ENCODE measurements at regions of chr21 and their contacts with region 1.

Region 1: DNA sequence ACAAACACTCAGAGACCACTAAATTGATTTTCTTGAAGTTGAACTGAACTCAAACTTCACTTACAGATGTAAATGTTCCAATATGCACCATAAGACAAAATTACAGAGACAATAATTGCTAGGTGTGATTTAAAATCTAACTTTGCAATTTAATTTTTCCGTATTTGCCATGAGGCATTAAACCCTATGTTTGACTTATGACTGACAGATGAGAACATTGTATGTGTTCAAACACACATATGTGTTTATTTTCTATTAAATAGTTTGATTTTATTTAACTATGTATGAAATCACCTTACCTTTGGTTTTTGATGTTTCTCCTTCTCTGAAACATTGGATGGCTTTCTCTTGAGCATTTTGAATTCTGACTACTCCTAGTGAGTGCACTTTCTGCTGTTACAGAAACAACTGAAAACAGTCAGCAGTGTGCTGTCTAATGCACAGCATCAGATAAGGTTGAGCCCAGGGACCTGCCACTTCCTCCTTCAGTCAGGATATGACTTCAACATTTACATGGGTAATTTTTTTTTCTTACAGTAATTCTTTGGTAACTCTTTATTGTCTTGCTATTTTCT is at the start of gene SAMSN1:
- DNase-seq: peak; percentile 47 to 91 (median 60)
- ATAC-seq: peak; percentile 83
- H3K4me3 ChIP-seq: peak within 1 kb of the TSS; percentile 70
- H3K4me3 Mint-ChIP-seq: peak within 1 kb of the TSS; percentile 92
- H3K27ac ChIP-seq: peak within 1 kb of the TSS; percentile 62 to 80
- H3K27ac Mint-ChIP-seq: peak within 1 kb of the TSS; percentile 87
- H3K4me1 ChIP-seq: peaks cover 27% of the 10 kb centered on the region
- H3K4me1 Mint-ChIP-seq: peaks cover 79% of the 10 kb centered on the region
- H3K27me3 ChIP-seq: no peaks in the 10 kb centered on the region
- H3K27me3 Mint-ChIP-seq: no peaks in the 10 kb centered on the region
- CTCF ChIP-seq: no peak
- total RNA-seq, gene SAMSN1: 51.2 to 51.3 TPM

Region 2: DNA sequence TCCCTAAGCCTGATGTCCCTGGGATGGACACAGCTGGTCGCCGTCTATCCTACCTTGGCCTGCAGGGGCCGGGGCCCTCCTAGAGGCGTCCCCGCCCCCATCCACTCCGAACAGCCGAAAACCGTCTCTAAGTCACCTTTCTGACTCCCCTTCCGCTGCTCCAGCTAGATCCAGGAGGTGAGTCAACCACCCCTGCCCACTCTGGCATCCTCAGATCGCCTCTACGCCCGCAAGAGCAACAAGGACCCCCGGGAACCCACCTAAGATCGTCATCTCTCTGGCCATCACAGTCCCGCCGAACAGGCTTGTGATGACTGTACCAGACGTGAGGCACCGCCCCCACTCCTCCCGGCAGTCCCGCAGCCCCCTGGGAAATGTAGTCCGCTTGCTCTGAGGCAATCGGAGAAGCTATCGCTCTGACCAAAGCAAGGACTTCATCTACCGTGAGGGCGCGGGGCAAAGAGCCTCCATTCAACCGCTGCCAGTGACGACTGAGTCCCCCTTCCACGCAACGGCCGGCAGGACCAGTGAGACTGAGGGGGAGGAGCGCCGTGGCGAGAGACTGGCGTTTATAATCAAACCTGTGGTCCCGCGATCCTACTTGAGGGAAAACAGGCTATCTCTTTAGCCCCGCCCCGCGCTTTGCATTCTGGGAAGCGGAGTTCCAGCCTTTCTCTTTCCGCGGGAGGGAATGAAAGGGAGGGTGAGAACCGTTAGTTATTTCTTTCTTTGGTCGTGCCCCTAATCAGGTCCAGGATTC is 163.0 kb before region 1 on chr21 and contains the start of gene HSPA13:
- CTCF ChIA-PET with region 1: no interaction called
- POLR2A ChIA-PET with region 1: interaction called, 5 read pairs
- intact Hi-C with region 1: loop called in 1 of 2 experiments (anchors 5 kb)
- DNase-seq: peak; percentile 95 to 100 (median 98)
- ATAC-seq: peak; percentile 93
- H3K4me3 ChIP-seq: peak within 1 kb of the TSS; percentile 80
- H3K4me3 Mint-ChIP-seq: peak within 1 kb of the TSS; percentile 96
- H3K27ac ChIP-seq: peak within 1 kb of the TSS; percentile 86
- H3K27ac Mint-ChIP-seq: peak within 1 kb of the TSS; percentile 97
- H3K4me1 ChIP-seq: peaks cover 17% of the 10 kb centered on the region
- H3K4me1 Mint-ChIP-seq: peaks cover 44% of the 10 kb centered on the region
- H3K27me3 ChIP-seq: no peaks in the 10 kb centered on the region
- H3K27me3 Mint-ChIP-seq: no peaks in the 10 kb centered on the region
- CTCF ChIP-seq: no peak
- total RNA-seq, gene HSPA13: 39.6 to 41.4 TPM

Region 3: DNA sequence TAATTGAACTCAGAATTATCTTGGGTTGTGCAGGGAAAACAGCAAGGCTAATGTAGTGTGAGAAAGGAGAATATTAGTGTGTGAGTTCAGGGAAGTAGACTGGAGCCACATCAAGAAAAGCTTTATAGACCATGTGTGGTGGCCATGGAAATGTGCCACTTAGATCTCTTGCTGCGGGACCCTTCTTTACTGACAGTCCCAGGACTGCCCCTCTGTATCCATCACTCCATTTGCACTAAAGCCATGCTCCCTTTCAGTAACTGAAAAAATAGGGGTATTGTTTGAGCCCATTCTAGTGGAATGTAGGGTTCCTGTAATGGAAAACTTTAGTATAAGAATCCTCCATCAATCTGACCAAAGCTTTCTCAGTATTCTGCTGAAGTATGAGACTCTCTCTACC is 32.2 kb before region 1 on chr21:
- CTCF ChIA-PET with region 1: no interaction called
- POLR2A ChIA-PET with region 1: no interaction called
- intact Hi-C with region 1: loop called (anchors 5 kb)
- DNase-seq: no peak
- ATAC-seq: no peak
- H3K4me3 ChIP-seq: no peak overlapping the region
- H3K4me3 Mint-ChIP-seq: no peak overlapping the region
- H3K27ac ChIP-seq: no peak overlapping the region
- H3K27ac Mint-ChIP-seq: no peak overlapping the region
- H3K4me1 ChIP-seq: peaks cover under 1% of the 10 kb centered on the region
- H3K4me1 Mint-ChIP-seq: peaks cover 21% of the 10 kb centered on the region
- H3K27me3 ChIP-seq: no peaks in the 10 kb centered on the region
- H3K27me3 Mint-ChIP-seq: no peaks in the 10 kb centered on the region
- CTCF ChIP-seq: no peak

Region 4: GRCh38 chr21:14559102-14559501 is 13.1 kb after region 1 on chr21:
- CTCF ChIA-PET with region 1: no interaction called
- POLR2A ChIA-PET with region 1: no interaction called
- intact Hi-C with region 1: no loop called
- DNase-seq: no peak
- ATAC-seq: no peak
- H3K4me3 ChIP-seq: no peak overlapping the region
- H3K4me3 Mint-ChIP-seq: no peak overlapping the region
- H3K27ac ChIP-seq: no peak overlapping the region
- H3K27ac Mint-ChIP-seq: no peak overlapping the region
- H3K4me1 ChIP-seq: peaks cover 6% of the 10 kb centered on the region
- H3K4me1 Mint-ChIP-seq: peaks cover 29% of the 10 kb centered on the region
- H3K27me3 ChIP-seq: no peaks in the 10 kb centered on the region
- H3K27me3 Mint-ChIP-seq: no peaks in the 10 kb centered on the region
- CTCF ChIP-seq: no peak

Region 5: DNA sequence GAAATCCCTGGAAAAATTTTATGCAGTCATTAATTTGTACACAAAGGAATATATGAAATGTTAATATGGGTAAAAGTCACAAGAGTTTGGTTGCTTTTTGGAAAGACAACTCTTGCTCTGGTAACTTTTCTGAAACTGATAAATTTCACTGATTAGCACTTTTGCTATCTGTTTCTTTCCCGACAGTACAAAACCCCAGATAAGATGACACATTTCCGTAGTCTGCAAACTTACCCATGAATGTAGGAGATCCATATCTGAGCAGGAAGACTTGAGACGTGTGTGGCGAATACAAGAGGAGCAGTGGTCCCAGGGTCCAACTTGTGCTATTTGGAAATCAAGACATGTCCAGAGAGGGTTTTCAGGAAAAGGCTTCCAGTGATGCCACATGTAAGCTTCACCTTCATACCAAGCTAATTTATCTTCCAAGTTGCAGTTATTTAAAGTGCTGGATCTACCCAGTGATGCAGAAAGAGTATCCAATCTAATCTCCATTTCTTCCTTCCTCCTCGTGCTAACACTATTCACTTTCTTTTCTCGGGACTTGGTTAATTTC is 36.0 kb after region 1 on chr21:
- CTCF ChIA-PET with region 1: interaction called, 4 read pairs
- POLR2A ChIA-PET with region 1: no interaction called
- intact Hi-C with region 1: loop called in 1 of 2 experiments (anchors 5 kb)
- DNase-seq: peak in 4 of 14 experiments; percentile 31 to 73 (median 68)
- ATAC-seq: peak; percentile 90
- H3K4me3 ChIP-seq: no peak overlapping the region
- H3K4me3 Mint-ChIP-seq: peak overlapping the region; percentile 32
- H3K27ac ChIP-seq: no peak overlapping the region
- H3K27ac Mint-ChIP-seq: peak overlapping the region; percentile 40
- H3K4me1 ChIP-seq: peaks cover 2% of the 10 kb centered on the region
- H3K4me1 Mint-ChIP-seq: peaks cover 8% of the 10 kb centered on the region
- H3K27me3 ChIP-seq: no peaks in the 10 kb centered on the region
- H3K27me3 Mint-ChIP-seq: no peaks in the 10 kb centered on the region
- CTCF ChIP-seq: no peak

Region 6: DNA sequence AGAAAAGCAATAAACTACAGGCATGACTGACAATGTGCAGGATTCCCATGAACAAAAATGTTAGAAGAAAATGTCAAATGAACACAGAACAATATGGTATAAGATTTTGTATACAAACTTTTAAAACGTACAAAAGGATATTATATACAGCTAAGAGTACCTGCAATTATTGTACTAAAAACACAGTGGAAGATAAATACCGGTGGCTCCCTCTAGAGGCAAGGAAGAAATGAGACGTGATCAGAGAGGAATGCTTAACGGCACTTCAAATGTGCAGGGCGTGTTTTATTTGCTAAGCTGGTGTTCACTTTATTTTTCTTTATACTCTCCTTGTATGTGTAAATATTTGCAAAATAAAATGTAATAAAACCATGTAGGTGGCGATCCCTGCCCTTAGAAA is 191.9 kb after region 1 on chr21:
- CTCF ChIA-PET with region 1: interaction called, 12 read pairs
- POLR2A ChIA-PET with region 1: interaction called, 5 read pairs
- intact Hi-C with region 1: loop called in 1 of 2 experiments (anchors 10 kb)
- DNase-seq: peak in 11 of 14 experiments; percentile 8 to 86 (median 34)
- ATAC-seq: peak; percentile 95
- H3K4me3 ChIP-seq: no peak overlapping the region
- H3K4me3 Mint-ChIP-seq: no peak overlapping the region
- H3K27ac ChIP-seq: no peak overlapping the region
- H3K27ac Mint-ChIP-seq: no peak overlapping the region
- H3K4me1 ChIP-seq: no peaks in the 10 kb centered on the region
- H3K4me1 Mint-ChIP-seq: peaks cover 5% of the 10 kb centered on the region
- H3K27me3 ChIP-seq: no peaks in the 10 kb centered on the region
- H3K27me3 Mint-ChIP-seq: no peaks in the 10 kb centered on the region
- CTCF ChIP-seq: peak; percentile 75

Measured in CD4-positive, alpha-beta T cell (primary cell).